IMR-90 (cell line): ENCODE measurements at regions of chr13 and their contacts with region 1.

Region 1: DNA sequence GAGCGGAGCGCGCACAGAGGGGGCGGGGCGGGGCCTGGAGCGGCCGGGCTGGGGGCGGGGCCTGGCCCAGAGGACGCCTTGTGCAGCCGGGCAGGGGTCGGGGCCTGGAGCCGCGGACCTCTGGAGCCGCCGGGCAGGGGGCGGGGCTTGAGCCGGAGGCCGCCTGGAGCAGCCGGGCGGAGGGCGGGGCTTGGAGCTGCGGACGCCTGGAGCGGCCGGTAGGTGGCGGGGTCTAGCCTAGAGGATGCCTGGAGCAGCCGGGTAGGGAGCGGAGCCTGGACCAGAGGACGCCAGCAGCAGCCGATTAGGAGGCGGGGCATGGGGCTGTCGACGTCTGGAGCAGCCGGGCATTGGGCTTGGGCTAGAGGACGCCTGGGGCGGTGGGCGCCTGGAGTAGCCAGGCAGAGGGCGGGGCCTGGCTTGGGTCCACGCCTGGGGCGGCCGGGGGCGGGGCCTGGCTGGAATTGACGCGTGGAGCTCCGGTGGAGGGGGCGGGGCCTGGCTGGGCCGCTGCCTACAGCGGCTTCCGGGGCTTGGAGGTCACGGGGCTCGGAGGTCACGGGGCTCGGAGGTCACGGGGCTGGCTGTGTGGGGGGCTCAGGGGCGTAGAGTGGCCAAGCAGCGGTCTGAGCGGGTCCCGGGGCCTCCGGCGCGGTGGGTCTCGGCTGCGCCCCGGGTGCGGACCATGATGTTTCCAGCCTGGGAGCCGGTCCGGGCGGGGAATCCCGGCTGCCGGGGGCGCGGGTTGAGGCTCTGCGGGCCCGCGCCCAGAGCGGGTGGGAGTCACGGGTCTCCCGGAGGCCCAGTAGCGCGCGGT is at the start of gene ANKRD10:
- DNase-seq: peak; percentile 99
- ATAC-seq: peak; percentile 86
- H3K4me3 ChIP-seq: peak within 1 kb of the TSS; percentile 98
- H3K27ac ChIP-seq: peak within 1 kb of the TSS; percentile 100
- H3K4me1 ChIP-seq: peaks cover 8% of the 10 kb centered on the region
- H3K27me3 ChIP-seq: no peaks in the 10 kb centered on the region
- CTCF ChIP-seq: peak; percentile 94
- POLR2A ChIP-seq: peak; percentile 19
- RAD21 ChIP-seq: peak; percentile 80
- total RNA-seq, gene ANKRD10: 18.3 and 24.2 TPM in 2 replicates

Region 2: GRCh38 chr13:110874508-110874960 is 40.7 kb before region 1 on chr13:
- CTCF ChIA-PET with region 1: no interaction called
- POLR2A ChIA-PET with region 1: no interaction called
- dilution Hi-C with region 1: no loop called
- in situ Hi-C with region 1: no loop called
- intact Hi-C with region 1: loop called (anchors 5 kb)
- DNase-seq: peak; percentile 46
- ATAC-seq: peak; percentile 80
- H3K4me3 ChIP-seq: peak overlapping the region; percentile 25
- H3K27ac ChIP-seq: no peak overlapping the region
- H3K4me1 ChIP-seq: peaks cover 7% of the 10 kb centered on the region; the same call in 1 of the 2 replicates
- H3K27me3 ChIP-seq: no peaks in the 10 kb centered on the region
- CTCF ChIP-seq: no peak
- POLR2A ChIP-seq: no peak
- RAD21 ChIP-seq: no peak

Region 3: DNA sequence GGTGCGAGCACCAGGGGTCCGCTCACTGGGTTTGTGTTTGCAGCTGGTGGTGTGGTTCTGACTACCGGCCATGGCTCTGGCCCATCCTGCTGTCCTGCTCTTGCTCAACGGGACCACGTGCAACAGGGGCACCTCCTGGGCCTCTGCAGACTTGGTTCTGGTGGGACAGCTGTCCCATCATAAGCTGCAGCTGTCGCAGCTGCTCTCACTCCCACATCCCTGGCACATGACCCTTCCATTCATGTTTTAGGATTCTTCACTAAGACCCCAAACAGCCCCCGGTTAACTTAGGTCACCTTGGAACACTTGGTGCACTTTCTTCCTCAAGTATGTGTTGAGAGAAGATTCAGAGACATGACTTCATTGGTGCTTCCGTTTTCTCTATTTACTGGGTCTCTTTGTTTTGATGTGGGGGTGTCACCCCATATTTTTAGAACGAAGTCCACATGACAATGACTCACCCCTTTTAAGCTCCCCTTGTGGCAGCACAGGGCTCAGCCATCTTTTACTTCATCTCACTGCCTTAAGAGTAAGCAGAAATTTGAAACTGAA is 131.4 kb after region 1 on chr13:
- CTCF ChIA-PET with region 1: interaction called, 3 read pairs
- POLR2A ChIA-PET with region 1: no interaction called
- dilution Hi-C with region 1: no loop called
- in situ Hi-C with region 1: loop called (anchors 10 kb)
- intact Hi-C with region 1: loop called (anchors 1 kb)
- DNase-seq: peak; percentile 58
- ATAC-seq: peak; percentile 60
- H3K4me3 ChIP-seq: no peak overlapping the region
- H3K27ac ChIP-seq: peak overlapping the region; percentile 66; the same call in 1 of the 2 replicates
- H3K4me1 ChIP-seq: peaks cover 10% of the 10 kb centered on the region
- H3K27me3 ChIP-seq: no peaks in the 10 kb centered on the region; the same call in 1 of the 2 replicates
- CTCF ChIP-seq: peak; percentile 37; the same call in 1 of the 2 replicates
- POLR2A ChIP-seq: no peak
- RAD21 ChIP-seq: peak; percentile 11; the same call in 1 of the 2 replicates

Region 4: GRCh38 chr13:111209613-111210012 is 294.3 kb after region 1 on chr13:
- CTCF ChIA-PET with region 1: no interaction called
- POLR2A ChIA-PET with region 1: no interaction called
- dilution Hi-C with region 1: no loop called
- in situ Hi-C with region 1: no loop called
- intact Hi-C with region 1: loop called (anchors 2 kb)
- DNase-seq: no peak
- ATAC-seq: no peak
- H3K4me3 ChIP-seq: no peak overlapping the region
- H3K27ac ChIP-seq: peak overlapping the region; percentile 49; the same call in 1 of the 2 replicates
- H3K4me1 ChIP-seq: peaks cover 18% of the 10 kb centered on the region
- H3K27me3 ChIP-seq: no peaks in the 10 kb centered on the region
- CTCF ChIP-seq: no peak
- POLR2A ChIP-seq: no peak
- RAD21 ChIP-seq: no peak

Region 5: DNA sequence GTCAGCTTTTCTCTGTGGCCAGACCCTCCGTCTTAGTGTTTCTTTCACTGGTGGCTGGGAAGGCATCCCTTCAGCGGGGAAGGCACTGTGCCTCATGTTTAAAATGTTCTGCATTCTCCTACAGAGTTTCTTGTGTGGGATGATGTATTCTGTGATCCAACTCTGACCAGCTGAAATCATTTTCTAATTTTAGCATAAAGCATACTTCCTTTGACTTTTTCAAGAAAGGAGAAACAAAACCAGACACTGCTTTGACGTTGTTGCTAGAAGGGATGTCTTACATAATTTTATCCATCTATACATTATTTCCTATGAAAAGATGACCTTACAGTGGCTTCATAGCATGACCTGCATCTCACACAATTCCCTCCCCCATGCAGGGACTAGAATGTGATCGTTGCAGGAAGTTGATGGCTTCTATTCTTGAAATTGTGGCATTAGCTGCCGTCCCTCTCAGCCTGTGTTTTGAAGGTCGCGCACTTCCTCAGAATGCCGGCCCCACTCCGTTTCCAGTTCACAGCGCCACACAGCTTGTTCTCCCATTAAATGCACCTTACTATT is 366.6 kb after region 1 on chr13:
- CTCF ChIA-PET with region 1: no interaction called
- POLR2A ChIA-PET with region 1: no interaction called
- dilution Hi-C with region 1: no loop called
- in situ Hi-C with region 1: no loop called
- intact Hi-C with region 1: no loop called
- DNase-seq: peak; percentile 85
- ATAC-seq: peak; percentile 69
- H3K4me3 ChIP-seq: no peak overlapping the region
- H3K27ac ChIP-seq: peak overlapping the region; percentile 49
- H3K4me1 ChIP-seq: peaks cover 11% of the 10 kb centered on the region
- H3K27me3 ChIP-seq: no peaks in the 10 kb centered on the region
- CTCF ChIP-seq: no peak
- POLR2A ChIP-seq: peak; percentile 55; the same call in 1 of the 2 replicates
- RAD21 ChIP-seq: no peak